Activated naive CD4-positive, alpha-beta T cell treated with anti-CD3 and anti-CD28 coated beads for 36 hours (primary cell): ENCODE measurements at regions of chr11 and their contacts with region 1.

Region 1: GRCh38 chr11:77994412-77995362 is at the start of gene INTS4:
- DNase-seq: peak; percentile 99
- H3K4me3 Mint-ChIP-seq: peak within 1 kb of the TSS; percentile 83
- H3K27ac Mint-ChIP-seq: peak within 1 kb of the TSS; percentile 91
- H3K4me1 Mint-ChIP-seq: peaks cover 17% of the 10 kb centered on the region
- H3K27me3 Mint-ChIP-seq: no peaks in the 10 kb centered on the region
- total RNA-seq, gene INTS4: 45.5 to 46.0 TPM

Region 2: GRCh38 chr11:77473801-77474683 is 520.6 kb before region 1 on chr11 and contains the start of gene PAK1:
- CTCF ChIA-PET with region 1: no interaction called
- intact Hi-C with region 1: loop called (anchors 2 kb)
- DNase-seq: peak; percentile 92
- H3K4me3 Mint-ChIP-seq: peak within 1 kb of the TSS; percentile 80
- H3K27ac Mint-ChIP-seq: peak within 1 kb of the TSS; percentile 74
- H3K4me1 Mint-ChIP-seq: peaks cover 13% of the 10 kb centered on the region
- H3K27me3 Mint-ChIP-seq: peaks cover 9% of the 10 kb centered on the region
- total RNA-seq, gene PAK1: 45.8 to 49.5 TPM

Region 3: GRCh38 chr11:77776455-77776854 is 218.2 kb before region 1 on chr11:
- CTCF ChIA-PET with region 1: interaction called, 4 read pairs
- intact Hi-C with region 1: loop called (anchors 2 kb)
- DNase-seq: no peak
- H3K4me3 Mint-ChIP-seq: no peak overlapping the region
- H3K27ac Mint-ChIP-seq: no peak overlapping the region
- H3K4me1 Mint-ChIP-seq: peaks cover 58% of the 10 kb centered on the region
- H3K27me3 Mint-ChIP-seq: no peaks in the 10 kb centered on the region

Region 4: GRCh38 chr11:78079232-78080083 is 84.8 kb after region 1 on chr11 and contains the start of gene NDUFC2:
- CTCF ChIA-PET with region 1: interaction called, 4 read pairs
- intact Hi-C with region 1: loop called (anchors 1 kb)
- DNase-seq: peak; percentile 75
- H3K4me3 Mint-ChIP-seq: peak within 1 kb of the TSS; percentile 92
- H3K27ac Mint-ChIP-seq: peak within 1 kb of the TSS; percentile 86
- H3K4me1 Mint-ChIP-seq: peaks cover 45% of the 10 kb centered on the region
- H3K27me3 Mint-ChIP-seq: no peaks in the 10 kb centered on the region
- total RNA-seq, gene NDUFC2: 180 to 183 TPM

Region 5: DNA sequence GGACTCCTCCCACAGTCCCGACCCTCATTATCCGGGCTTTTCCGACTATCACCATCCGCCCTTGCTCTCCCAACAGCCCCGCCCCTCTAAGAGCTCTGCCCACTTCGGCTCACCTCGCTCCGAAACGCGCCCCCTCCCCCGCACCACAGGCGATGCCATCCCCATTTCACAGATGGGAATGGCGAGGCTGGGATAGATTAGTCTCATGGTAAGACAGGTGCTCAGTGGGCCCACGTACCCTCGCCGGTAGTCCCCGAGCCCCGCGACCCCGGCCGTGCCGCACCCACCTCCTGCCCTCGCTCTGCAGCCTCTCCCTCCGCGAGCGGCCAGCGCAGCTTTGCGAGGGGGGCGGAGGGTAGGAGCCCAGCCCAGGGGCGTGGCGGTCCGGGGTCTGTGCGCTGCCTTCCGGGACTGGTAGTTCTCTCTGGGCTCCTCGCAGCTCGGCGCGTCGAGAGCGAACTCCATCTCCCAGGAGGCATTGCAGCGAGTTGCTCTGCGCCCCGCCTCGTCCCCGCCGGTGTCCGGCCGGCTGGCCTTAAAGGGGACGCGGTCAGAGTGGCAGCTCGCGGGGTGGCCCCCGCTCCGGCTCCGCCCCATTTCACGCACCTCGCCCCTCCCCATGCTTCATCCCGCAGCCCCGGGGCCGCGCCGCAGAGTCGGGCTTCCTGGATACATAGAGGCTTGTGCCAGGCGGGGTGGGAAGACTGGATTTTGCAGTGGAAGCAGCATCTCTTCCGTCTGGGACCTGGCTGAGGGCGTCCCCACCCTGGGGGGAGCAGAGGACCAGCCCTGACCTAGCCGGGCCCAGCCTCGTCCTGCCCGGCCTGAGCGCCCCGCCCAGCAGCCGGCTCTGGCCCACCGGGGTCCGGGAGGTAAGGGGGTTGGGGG is 193.8 kb after region 1 on chr11 and contains the starts of genes KCTD21 and USP35:
- CTCF ChIA-PET with region 1: no interaction called
- intact Hi-C with region 1: loop called (anchors 1 kb)
- DNase-seq: peak; percentile 93
- H3K4me3 Mint-ChIP-seq: peak within 1 kb of the TSS; percentile 99
- H3K27ac Mint-ChIP-seq: peak within 1 kb of the TSS; percentile 99
- H3K4me1 Mint-ChIP-seq: peaks cover 55% of the 10 kb centered on the region
- H3K27me3 Mint-ChIP-seq: no peaks in the 10 kb centered on the region
- total RNA-seq, gene KCTD21: 8.6 to 10.1 TPM
- total RNA-seq, gene USP35: 13.4 to 14.2 TPM

Region 6: DNA sequence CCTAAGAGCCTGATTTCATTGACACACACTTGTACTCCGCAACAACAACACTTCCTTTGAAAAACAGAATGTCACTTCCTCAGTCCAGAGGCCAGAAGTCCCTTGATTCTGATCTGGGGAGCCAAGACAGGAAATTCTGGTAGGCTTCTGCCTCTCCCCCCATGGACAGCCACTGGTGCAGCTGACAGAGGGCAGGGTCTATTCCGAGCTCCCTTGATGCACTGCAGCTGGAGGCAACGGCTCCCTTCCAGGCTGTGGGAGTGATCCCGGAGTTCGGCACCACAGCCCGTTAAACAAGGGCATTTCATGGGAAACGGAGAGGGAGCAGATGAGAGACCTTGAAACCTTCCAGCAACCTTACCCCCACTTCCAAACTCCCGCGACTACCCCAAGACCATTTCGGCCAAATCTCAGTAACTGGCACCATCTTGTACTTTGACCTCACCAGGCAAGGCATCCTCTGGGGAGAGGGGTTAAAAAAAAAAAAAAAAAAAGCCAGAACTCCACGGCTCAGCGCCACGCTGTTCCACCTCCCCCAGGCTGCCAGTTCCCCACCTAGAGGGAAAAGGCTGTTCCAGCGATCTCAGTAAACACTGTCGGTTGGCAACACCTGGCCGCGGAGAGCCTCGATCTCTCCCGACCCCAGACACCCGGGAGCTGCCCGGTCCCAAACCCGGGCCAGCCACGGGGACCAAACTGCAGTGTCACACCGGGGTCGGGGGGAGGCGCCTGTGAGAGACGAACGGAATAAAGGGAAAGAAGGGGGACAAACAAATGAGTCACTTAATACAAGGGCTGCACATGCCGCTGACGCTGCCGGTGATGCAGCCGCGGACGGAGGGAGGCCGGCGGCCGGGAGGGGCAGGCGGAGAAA is 421.9 kb after region 1 on chr11:
- CTCF ChIA-PET with region 1: interaction called, 3 read pairs
- intact Hi-C with region 1: loop called (anchors 1 kb)
- DNase-seq: peak; percentile 88
- H3K4me3 Mint-ChIP-seq: peak overlapping the region; percentile 81
- H3K27ac Mint-ChIP-seq: peak overlapping the region; percentile 44
- H3K4me1 Mint-ChIP-seq: peaks cover 22% of the 10 kb centered on the region
- H3K27me3 Mint-ChIP-seq: peaks cover 33% of the 10 kb centered on the region